Panc1 (cell line): ENCODE measurements at regions of chr14 and their contacts with region 1.

Region 1: DNA sequence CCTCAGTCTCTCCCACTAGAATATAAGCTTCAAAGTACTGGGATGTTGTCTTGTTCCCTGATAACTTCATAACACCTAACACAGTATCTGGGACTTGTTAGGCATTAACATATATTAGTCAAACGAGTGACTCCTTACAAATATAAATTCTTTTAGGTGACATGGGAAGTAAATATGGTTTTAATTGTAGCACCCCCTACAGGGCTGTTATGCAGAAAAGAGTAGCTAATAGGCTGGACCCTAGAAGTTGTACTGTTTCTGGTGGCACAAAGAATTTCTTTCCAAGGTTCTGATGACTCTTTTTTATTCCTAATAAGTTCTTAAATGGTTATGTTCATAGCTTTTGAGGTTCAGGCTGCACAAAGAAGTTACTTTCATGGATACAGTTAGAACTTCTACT is 29.8 kb downstream of the GPATCH2L start:
- DNase-seq: no peak
- ATAC-seq: no peak
- H3K4me3 ChIP-seq: no peak overlapping the region
- H3K27ac ChIP-seq: no peak overlapping the region
- H3K4me1 ChIP-seq: no peaks in the 10 kb centered on the region
- H3K27me3 ChIP-seq: no peaks in the 10 kb centered on the region
- CTCF ChIP-seq: peak; percentile 23; the same call in 1 of the 2 replicates

Region 2: DNA sequence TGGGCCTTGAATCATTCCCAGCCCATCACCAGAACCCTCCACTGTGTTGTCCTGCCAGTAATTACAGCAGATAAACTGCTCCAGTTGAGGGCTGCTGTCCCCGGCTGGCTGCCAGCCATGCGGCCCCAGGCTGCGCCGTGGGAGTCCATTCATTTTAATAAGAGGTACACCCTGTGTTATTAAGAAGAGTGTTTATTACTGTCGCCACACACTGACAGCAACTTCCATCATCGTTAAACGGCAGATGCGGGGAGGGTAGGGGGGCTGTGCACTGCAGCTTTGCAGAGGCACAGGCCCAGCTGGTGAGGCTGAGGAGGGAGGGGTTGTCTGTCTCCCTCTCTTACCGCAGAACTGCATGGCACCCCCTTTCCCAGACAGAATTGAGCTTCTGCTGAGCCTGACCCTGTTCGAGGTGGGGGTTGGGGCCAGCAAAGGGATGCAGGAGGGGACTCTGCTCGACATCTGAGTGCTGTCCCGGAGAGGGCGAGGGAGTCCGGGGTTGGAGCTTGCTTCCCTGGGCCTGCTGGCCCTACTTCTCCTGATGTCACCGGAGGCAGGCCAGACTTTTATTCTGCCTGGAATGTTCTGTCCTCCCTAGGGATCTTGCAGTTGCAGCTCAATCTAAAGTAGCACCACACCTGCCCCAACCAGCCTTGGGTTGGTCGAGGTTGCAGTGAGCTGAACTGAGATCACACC is 63.6 kb before region 1 on chr14:
- CTCF ChIA-PET with region 1: no interaction called
- POLR2A ChIA-PET with region 1: interaction called, 11 read pairs
- in situ Hi-C with region 1: no loop called
- intact Hi-C with region 1: no loop called
- DNase-seq: no peak
- ATAC-seq: no peak
- H3K4me3 ChIP-seq: no peak overlapping the region
- H3K27ac ChIP-seq: no peak overlapping the region
- H3K4me1 ChIP-seq: no peaks in the 10 kb centered on the region
- H3K27me3 ChIP-seq: no peaks in the 10 kb centered on the region
- CTCF ChIP-seq: no peak

Region 3: GRCh38 chr14:76151398-76152339 is 29.9 kb before region 1 on chr14 and contains the start of gene GPATCH2L:
- CTCF ChIA-PET with region 1: no interaction called
- POLR2A ChIA-PET with region 1: no interaction called
- in situ Hi-C with region 1: no loop called
- intact Hi-C with region 1: no loop called
- DNase-seq: peak; percentile 45
- ATAC-seq: peak; percentile 97
- H3K4me3 ChIP-seq: peak within 1 kb of the TSS; percentile 86 to 88
- H3K27ac ChIP-seq: peak within 1 kb of the TSS; percentile 86
- H3K4me1 ChIP-seq: peaks cover 13% of the 10 kb centered on the region
- H3K27me3 ChIP-seq: no peaks in the 10 kb centered on the region
- CTCF ChIP-seq: no peak
- total RNA-seq, gene GPATCH2L: 35.0 TPM

Region 4: GRCh38 chr14:76537906-76538647 is 356.5 kb after region 1 on chr14:
- CTCF ChIA-PET with region 1: no interaction called
- POLR2A ChIA-PET with region 1: no interaction called
- in situ Hi-C with region 1: no loop called
- intact Hi-C with region 1: no loop called
- DNase-seq: no peak
- ATAC-seq: no peak
- H3K4me3 ChIP-seq: no peak overlapping the region
- H3K27ac ChIP-seq: no peak overlapping the region
- H3K4me1 ChIP-seq: no peaks in the 10 kb centered on the region
- H3K27me3 ChIP-seq: no peaks in the 10 kb centered on the region
- CTCF ChIP-seq: no peak